Mammary epithelial cell (primary cell): ENCODE measurements at regions of chr10 and their contacts with region 1.

Region 1: DNA sequence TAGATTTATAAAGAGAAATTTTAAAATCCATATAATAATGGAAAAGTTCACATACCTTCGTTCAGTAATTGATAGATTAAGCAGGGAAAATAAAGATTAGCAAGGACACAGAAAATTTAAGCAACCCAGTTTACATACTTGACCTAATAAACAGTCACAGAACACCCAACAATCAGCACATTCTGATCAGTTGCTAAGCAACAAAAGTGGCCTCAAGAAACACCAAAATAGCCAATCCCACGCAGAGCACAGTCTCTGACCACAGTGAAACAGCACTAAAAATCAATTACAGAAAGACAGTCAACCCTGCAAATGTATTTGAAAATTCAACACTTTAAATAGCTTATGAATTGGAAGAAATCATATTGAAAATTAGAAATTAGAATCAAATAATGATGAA is 39.3 kb upstream of the DRGX start:
- DNase-seq: no peak
- H3K4me3 ChIP-seq: no peak overlapping the region
- H3K27ac ChIP-seq: no peak overlapping the region
- H3K4me1 ChIP-seq: no peaks in the 10 kb centered on the region
- H3K27me3 ChIP-seq: no peaks in the 10 kb centered on the region
- CTCF ChIP-seq: no peak

Region 2: GRCh38 chr10:49237985-49238384 is 197.2 kb before region 1 on chr10:
- CTCF ChIA-PET with region 1: no interaction called
- dilution Hi-C with region 1: no loop called
- in situ Hi-C with region 1: no loop called
- intact Hi-C with region 1: no loop called
- DNase-seq: no peak
- H3K4me3 ChIP-seq: no peak overlapping the region
- H3K27ac ChIP-seq: no peak overlapping the region
- H3K4me1 ChIP-seq: no peaks in the 10 kb centered on the region
- H3K27me3 ChIP-seq: peaks cover 2% of the 10 kb centered on the region
- CTCF ChIP-seq: no peak

Region 3: DNA sequence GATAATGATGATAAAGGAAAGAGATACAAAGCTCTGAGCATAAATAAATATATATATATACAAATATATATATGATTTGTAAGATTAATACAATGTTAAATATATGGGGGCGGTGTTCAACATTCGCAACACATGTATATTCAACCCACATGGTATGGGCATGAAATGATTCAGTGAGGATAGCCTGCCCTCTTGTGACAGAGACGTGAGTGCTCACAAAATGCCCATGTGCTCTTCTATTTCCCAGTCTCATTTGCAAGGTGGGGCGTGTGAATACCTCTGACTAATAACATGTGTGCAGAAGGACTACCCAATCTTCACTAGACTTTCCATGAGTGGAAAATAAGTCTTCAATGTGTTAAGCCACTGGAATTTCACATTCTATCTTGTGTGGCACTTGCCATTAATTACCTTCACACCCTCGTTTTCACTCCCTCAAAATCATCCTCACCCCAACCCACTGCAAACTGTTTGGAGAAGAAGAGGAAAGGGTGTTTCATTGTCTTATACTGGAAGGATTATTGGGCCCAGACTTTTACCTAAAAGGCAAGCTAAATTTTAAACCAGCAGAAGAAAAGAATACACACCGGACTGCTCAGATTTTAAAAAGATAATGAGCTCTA is 789.2 kb after region 1 on chr10:
- CTCF ChIA-PET with region 1: interaction called, 17 read pairs
- dilution Hi-C with region 1: no loop called
- in situ Hi-C with region 1: no loop called
- intact Hi-C with region 1: no loop called
- DNase-seq: peak; percentile 74
- H3K4me3 ChIP-seq: no peak overlapping the region
- H3K27ac ChIP-seq: no peak overlapping the region
- H3K4me1 ChIP-seq: peaks cover 4% of the 10 kb centered on the region
- H3K27me3 ChIP-seq: no peaks in the 10 kb centered on the region
- CTCF ChIP-seq: peak; percentile 65 to 79